HepG2 (cell line): ENCODE measurements at regions of chr17 and their contacts with region 1.

Region 1: GRCh38 chr17:16353317-16354174 is at the start of gene CENPV:
- DNase-seq: peak; percentile 69
- ATAC-seq: peak; percentile 91
- H3K4me3 ChIP-seq: peak within 1 kb of the TSS; percentile 85 to 89 (median 87)
- H3K27ac ChIP-seq: peak within 1 kb of the TSS; percentile 94
- H3K4me1 ChIP-seq: peaks cover 35% of the 10 kb centered on the region
- H3K27me3 ChIP-seq: no peaks in the 10 kb centered on the region
- CTCF ChIP-seq: peak; percentile 49
- EP300 ChIP-seq: no peak
- POLR2A ChIP-seq: peak; percentile 53 to 76; a peak in 3 of 4 replicates
- RAD21 ChIP-seq: peak; percentile 72
- total RNA-seq, gene CENPV: 216 and 292 TPM in 2 replicates

Region 2: DNA sequence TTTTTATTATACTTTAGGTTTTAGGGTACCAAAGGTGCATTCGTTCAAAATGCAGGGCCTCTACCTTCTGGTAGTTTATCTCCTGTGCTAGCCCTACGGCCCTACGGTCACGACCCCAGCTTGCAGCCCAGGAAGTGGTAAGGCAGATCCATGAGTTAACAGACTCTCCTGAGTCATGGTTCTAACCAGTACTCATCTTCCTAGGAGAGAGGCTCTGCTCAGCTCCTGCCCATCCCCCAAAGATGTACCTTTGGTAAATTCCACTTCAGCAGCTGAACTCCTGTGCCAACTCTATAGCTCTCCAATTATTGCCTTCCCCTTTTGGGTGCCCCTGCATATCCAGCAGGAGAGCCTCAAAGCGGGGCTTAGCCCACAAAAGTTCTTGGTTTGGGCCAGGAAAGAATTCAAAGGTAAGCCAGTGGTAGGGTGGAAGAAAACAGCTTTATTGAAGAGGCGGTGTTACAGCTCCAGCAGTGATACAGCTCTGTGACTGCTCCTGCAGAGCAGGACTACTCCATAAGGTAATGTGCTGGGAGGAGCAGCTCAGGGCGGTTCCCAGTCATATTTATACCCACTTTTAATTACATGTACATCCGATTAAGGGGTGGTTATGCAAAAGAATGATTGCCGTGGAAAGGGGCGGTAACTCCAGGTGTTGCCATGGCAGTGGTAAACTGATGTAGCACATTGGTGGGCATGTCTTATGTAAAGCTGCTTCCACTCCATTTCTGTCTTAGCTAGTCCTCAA is 1329.8 kb before region 1 on chr17:
- CTCF ChIA-PET with region 1: no interaction called
- POLR2A ChIA-PET with region 1: no interaction called
- in situ Hi-C with region 1: no loop called
- intact Hi-C with region 1: no loop called
- DNase-seq: no peak
- ATAC-seq: no peak
- H3K4me3 ChIP-seq: no peak overlapping the region
- H3K27ac ChIP-seq: no peak overlapping the region
- H3K4me1 ChIP-seq: no peaks in the 10 kb centered on the region
- H3K27me3 ChIP-seq: peaks cover 0 to 4% of the 10 kb centered on the region in 2 experiments; a peak in 2 of 5 replicates
- CTCF ChIP-seq: no peak
- EP300 ChIP-seq: no peak
- POLR2A ChIP-seq: no peak
- RAD21 ChIP-seq: no peak

Region 3: DNA sequence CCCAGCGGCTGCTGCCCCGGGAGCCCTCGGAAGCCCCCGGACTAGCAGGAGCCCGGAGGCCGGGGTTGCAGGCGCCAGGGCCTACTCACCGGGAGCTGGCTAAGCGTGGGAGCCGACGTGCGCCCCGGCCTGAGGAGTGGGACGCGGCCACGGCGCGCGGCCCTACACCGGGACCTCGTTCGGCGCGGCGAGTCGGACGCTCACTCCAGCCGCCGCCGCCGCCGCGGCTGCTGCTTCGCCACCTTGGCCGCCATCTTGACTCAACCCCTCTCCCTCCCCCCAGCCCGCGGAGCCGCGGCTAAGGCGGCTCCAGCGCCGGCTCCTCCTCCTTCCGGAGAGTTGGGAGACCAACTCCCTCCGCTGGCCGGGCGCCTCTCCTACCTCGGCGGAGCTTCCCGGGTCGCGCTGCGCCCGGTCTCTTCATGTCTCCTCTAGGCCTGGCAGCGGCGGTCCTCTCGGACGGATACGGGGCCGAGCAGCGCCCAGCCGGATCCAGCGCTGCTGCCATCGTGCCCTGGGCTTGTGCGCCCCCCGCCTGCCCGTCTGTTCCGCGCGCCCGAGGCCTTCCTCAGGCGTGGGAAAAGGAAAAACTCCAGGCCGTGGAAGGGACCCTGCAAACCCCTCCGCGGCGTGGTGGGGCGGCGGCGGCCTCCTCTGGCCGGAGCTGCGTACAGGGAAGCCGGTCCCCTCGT is 138.1 kb before region 1 on chr17 and contains the start of gene NCOR1:
- CTCF ChIA-PET with region 1: no interaction called
- POLR2A ChIA-PET with region 1: interaction called, 19 read pairs
- in situ Hi-C with region 1: no loop called
- intact Hi-C with region 1: loop called (anchors 5 kb)
- DNase-seq: peak; percentile 85
- ATAC-seq: peak; percentile 90
- H3K4me3 ChIP-seq: peak within 1 kb of the TSS; percentile 84 to 91 (median 88)
- H3K27ac ChIP-seq: peak within 1 kb of the TSS; percentile 99
- H3K4me1 ChIP-seq: peaks cover 43% of the 10 kb centered on the region
- H3K27me3 ChIP-seq: no peaks in the 10 kb centered on the region; a peak in 1 of 5 replicates
- CTCF ChIP-seq: peak; percentile 63
- EP300 ChIP-seq: 0 out of 4 replicates have a peak, but pooled peaks of 1 of the 2 experiments have one; percentile 10
- POLR2A ChIP-seq: peak; percentile 91 to 93
- RAD21 ChIP-seq: peak; percentile 60; the same call in 1 of the 2 replicates
- total RNA-seq, gene NCOR1: 57.0 and 80.4 TPM in 2 replicates

Region 4: DNA sequence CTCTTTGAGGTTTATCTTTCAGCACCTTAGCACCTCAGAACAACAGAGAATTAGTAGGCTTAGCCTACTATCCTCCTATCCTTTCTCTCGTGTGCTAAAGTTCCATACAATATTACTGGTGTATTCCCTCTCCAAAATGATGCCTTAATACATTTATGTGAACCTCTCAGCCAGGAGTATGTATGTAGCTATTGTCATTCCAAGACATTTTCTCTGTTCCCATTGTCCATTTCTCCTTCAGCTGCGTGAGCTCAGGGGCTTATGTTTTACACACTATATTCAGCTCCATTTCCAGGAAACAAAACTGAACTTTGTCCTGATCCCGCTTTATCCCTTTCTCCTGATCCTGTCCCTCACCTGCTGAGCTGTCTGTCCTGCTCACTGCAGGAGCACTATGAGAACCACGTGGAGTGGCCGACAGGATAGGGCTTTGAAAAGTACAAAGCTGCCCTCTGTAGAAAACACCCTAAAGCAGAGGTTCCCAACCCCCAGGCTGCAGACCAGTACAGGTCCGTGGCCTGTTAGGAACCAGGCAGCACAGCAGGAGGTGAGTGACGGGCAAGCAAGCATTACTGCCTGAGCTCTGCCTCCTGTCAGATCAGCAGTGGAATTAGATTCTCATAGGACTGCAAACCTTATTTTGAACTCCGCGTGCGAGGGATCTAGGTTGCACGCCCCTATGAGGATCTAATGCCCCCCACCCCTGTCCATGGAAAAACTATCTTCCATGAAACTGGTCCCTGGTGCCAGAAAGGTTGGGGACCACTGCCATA is 56.0 kb before region 1 on chr17:
- CTCF ChIA-PET with region 1: no interaction called
- POLR2A ChIA-PET with region 1: interaction called, 46 read pairs
- in situ Hi-C with region 1: no loop called
- intact Hi-C with region 1: no loop called
- DNase-seq: peak; percentile 86
- ATAC-seq: peak; percentile 77
- H3K4me3 ChIP-seq: peak overlapping the region in 2 of 3 experiments; percentile 17 to 42; a peak in 4 of 6 replicates
- H3K27ac ChIP-seq: peak overlapping the region; percentile 97
- H3K4me1 ChIP-seq: peaks cover 78% of the 10 kb centered on the region
- H3K27me3 ChIP-seq: no peaks in the 10 kb centered on the region
- CTCF ChIP-seq: peak; percentile 33; the same call in 1 of the 2 replicates
- EP300 ChIP-seq: peak in 1 of 2 experiments; percentile 38; a peak in 1 of 4 replicates
- POLR2A ChIP-seq: peak; percentile 24 to 75; a peak in 3 of 4 replicates
- RAD21 ChIP-seq: no peak

Region 5: GRCh38 chr17:16304830-16305229 is 48.7 kb before region 1 on chr17:
- CTCF ChIA-PET with region 1: no interaction called
- POLR2A ChIA-PET with region 1: interaction called, 46 read pairs
- in situ Hi-C with region 1: no loop called
- intact Hi-C with region 1: loop called (anchors 5 kb)
- DNase-seq: peak; percentile 63
- ATAC-seq: peak; percentile 86
- H3K4me3 ChIP-seq: no peak overlapping the region
- H3K27ac ChIP-seq: no peak overlapping the region
- H3K4me1 ChIP-seq: peaks cover 79% of the 10 kb centered on the region
- H3K27me3 ChIP-seq: no peaks in the 10 kb centered on the region
- CTCF ChIP-seq: peak; percentile 86
- EP300 ChIP-seq: no peak
- POLR2A ChIP-seq: no peak
- RAD21 ChIP-seq: peak; percentile 88

Region 6: DNA sequence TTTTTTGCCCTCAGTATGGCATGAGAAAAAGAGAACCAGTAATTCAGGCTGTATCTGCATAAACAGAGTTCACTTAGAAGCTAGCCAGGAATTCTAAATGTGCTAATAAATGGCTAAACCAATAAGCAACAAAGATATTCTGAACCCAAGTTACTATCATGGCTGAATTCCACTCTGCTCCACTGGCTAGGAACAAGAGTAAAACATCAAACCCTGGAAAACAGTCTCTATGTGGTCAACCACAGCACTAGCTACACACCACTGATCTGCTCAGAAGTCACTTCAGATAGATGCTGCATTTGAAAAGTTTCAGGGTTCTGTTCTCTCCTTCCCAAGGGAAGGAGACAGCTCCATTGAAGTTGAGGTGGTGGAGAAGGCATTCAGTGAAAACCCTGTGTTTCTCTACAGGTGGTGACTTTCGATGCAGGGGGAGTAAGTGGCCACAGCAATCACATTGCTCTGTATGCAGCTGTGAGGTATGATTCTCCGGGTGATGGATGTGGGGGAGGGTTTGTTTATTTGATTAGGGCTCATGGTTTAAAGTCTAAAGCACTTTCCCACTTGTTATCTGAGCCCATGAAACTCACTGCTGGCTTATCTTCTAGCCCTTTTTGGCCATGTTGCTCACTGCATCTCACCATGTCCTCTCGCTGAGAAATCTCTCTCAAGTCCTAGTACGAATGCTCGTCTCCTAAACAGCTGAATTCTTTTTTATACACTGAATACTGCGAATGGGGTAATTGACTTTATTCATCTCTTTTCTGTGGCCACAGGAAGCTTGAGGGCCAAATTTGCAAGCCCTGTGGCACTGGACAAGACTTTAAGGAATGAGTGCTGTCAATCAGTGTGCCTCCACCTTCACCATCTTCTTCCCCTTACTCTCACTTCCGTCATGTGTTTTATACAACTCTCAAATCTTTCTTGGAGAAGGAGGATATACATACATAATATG is 40.1 kb before region 1 on chr17:
- CTCF ChIA-PET with region 1: no interaction called
- POLR2A ChIA-PET with region 1: interaction called, 29 read pairs
- in situ Hi-C with region 1: no loop called
- intact Hi-C with region 1: loop called (anchors 5 kb)
- DNase-seq: peak; percentile 94
- ATAC-seq: peak; percentile 97
- H3K4me3 ChIP-seq: peak overlapping the region in 2 of 3 experiments; percentile 1 to 35; a peak in 2 of 6 replicates
- H3K27ac ChIP-seq: peak overlapping the region; percentile 97
- H3K4me1 ChIP-seq: peaks cover 55% of the 10 kb centered on the region
- H3K27me3 ChIP-seq: no peaks in the 10 kb centered on the region
- CTCF ChIP-seq: peak; percentile 11; the same call in 1 of the 2 replicates
- EP300 ChIP-seq: peak in 1 of 2 experiments; percentile 76; a peak in 3 of 4 replicates
- POLR2A ChIP-seq: peak; percentile 44 to 55; a peak in 2 of 4 replicates
- RAD21 ChIP-seq: 0 out of 2 replicates have a peak, but pooled peaks have one; percentile 41

Region 7: DNA sequence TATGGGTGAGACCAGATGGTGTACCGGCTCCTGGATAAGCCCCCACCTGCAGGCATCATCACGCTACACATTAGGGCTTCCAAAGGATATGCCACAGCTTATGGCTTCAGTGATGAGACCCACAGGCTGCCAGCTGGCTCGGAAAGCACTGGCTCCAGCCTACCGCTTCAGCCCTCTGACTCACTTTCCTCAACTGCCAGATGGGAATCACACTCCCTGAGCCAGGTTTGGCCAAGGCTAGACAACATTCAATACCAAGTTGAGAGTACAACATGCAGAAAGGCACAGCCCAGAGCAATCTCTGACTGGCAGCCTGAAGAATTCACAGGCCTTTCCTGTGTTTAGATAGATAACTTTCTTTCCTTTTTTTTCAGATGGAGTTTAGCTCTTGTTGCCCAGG is 10.6 kb before region 1 on chr17:
- CTCF ChIA-PET with region 1: no interaction called
- POLR2A ChIA-PET with region 1: interaction called, 17 read pairs
- in situ Hi-C with region 1: no loop called
- intact Hi-C with region 1: no loop called
- DNase-seq: no peak
- ATAC-seq: peak; percentile 10; the same call in 2 of the 3 replicates
- H3K4me3 ChIP-seq: no peak overlapping the region
- H3K27ac ChIP-seq: no peak overlapping the region
- H3K4me1 ChIP-seq: no peaks in the 10 kb centered on the region
- H3K27me3 ChIP-seq: no peaks in the 10 kb centered on the region
- CTCF ChIP-seq: no peak
- EP300 ChIP-seq: no peak
- POLR2A ChIP-seq: peak in 1 of 2 experiments; percentile 37; a peak in 1 of 4 replicates
- RAD21 ChIP-seq: no peak

Region 8: GRCh38 chr17:16363749-16364536 is 10.4 kb after region 1 on chr17:
- CTCF ChIA-PET with region 1: no interaction called
- POLR2A ChIA-PET with region 1: interaction called, 17 read pairs
- in situ Hi-C with region 1: no loop called
- intact Hi-C with region 1: no loop called
- DNase-seq: peak; percentile 66
- ATAC-seq: peak; percentile 93
- H3K4me3 ChIP-seq: no peak overlapping the region
- H3K27ac ChIP-seq: no peak overlapping the region
- H3K4me1 ChIP-seq: peaks cover 38% of the 10 kb centered on the region
- H3K27me3 ChIP-seq: no peaks in the 10 kb centered on the region
- CTCF ChIP-seq: peak; percentile 86
- EP300 ChIP-seq: no peak
- POLR2A ChIP-seq: no peak
- RAD21 ChIP-seq: peak; percentile 74